B cell (primary cell): ENCODE measurements at regions of chr1 and their contacts with region 1.

Region 1: GRCh38 chr1:12078938-12079861 is 16.1 kb downstream of the TNFRSF8 start:
- DNase-seq: peak; percentile 67
- ATAC-seq: peak; percentile 63
- H3K4me3 ChIP-seq: peak overlapping the region in 4 of 5 experiments; percentile 1 to 28 (median 15)
- H3K4me3 Mint-ChIP-seq: peak overlapping the region; percentile 79
- H3K27ac ChIP-seq: peak overlapping the region; percentile 5 to 51
- H3K27ac Mint-ChIP-seq: peak overlapping the region; percentile 69
- H3K4me1 ChIP-seq: peaks cover 15 to 32% of the 10 kb centered on the region in 2 donors
- H3K4me1 Mint-ChIP-seq: peaks cover 30% of the 10 kb centered on the region
- H3K27me3 ChIP-seq: peaks cover 0 to 4% (median under 1%) of the 10 kb centered on the region in 4 experiments
- H3K27me3 Mint-ChIP-seq: peaks cover 4% of the 10 kb centered on the region
- CTCF ChIP-seq: peak; percentile 72

Region 2: GRCh38 chr1:11831945-11832725 is 247.1 kb before region 1 on chr1:
- CTCF ChIA-PET with region 1: no interaction called
- POLR2A ChIA-PET with region 1: no interaction called
- intact Hi-C with region 1: no loop called
- DNase-seq: no peak
- ATAC-seq: no peak
- H3K4me3 ChIP-seq: no peak overlapping the region
- H3K4me3 Mint-ChIP-seq: no peak overlapping the region
- H3K27ac ChIP-seq: no peak overlapping the region
- H3K27ac Mint-ChIP-seq: no peak overlapping the region
- H3K4me1 ChIP-seq: no peaks in the 10 kb centered on the region
- H3K4me1 Mint-ChIP-seq: no peaks in the 10 kb centered on the region
- H3K27me3 ChIP-seq: no peaks in the 10 kb centered on the region
- H3K27me3 Mint-ChIP-seq: no peaks in the 10 kb centered on the region
- CTCF ChIP-seq: no peak

Region 3: DNA sequence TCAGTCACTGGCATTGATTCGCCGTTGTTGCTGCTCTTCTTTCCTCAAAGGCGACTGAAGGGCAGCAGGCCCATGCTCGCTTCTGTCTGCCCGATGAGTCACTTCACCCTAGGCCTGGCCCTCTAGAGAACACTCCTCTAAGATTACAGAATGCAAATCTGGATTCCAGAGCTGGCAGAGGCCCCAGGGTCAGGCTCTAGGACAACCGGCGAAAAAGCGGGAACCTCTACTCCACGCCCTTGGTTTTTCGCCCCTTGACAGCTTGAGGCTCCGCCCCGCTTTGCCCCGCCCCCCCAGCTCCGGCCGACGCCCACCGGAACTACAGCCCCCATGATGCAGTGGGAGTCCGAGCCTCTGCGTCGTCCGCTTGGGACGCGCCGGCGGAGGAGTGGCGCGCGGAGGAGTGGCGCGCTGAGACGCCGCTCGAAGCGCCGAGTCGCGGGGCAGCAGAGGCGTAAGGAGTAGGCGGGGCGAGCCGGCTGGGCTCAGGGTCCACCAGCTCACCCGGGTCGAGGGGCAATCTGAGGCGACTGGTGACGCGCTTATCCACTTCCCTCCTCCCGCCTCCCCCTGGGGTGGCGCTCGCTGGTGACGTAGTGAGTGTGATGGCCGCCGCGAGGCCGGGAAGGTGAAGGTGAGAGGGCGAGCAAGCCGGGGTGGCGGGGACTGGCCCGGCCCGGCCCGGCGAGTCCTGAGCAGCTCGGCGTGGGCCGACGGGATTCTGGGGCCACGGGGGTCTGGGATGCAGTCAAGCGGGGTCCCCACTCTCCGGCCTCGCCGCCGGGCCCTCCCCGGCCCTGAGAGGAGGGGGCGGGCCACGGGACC is 99.1 kb before region 1 on chr1 and contains the start of gene MFN2:
- CTCF ChIA-PET with region 1: no interaction called
- POLR2A ChIA-PET with region 1: no interaction called
- intact Hi-C with region 1: loop called (anchors 5 kb)
- DNase-seq: peak; percentile 98
- ATAC-seq: peak; percentile 91
- H3K4me3 ChIP-seq: peak within 1 kb of the TSS; percentile 66 to 86 (median 81)
- H3K4me3 Mint-ChIP-seq: peak within 1 kb of the TSS; percentile 95
- H3K27ac ChIP-seq: peak within 1 kb of the TSS; percentile 81 to 94
- H3K27ac Mint-ChIP-seq: peak within 1 kb of the TSS; percentile 95
- H3K4me1 ChIP-seq: peaks cover 12 to 16% of the 10 kb centered on the region in 2 donors
- H3K4me1 Mint-ChIP-seq: peaks cover 40% of the 10 kb centered on the region
- H3K27me3 ChIP-seq: no peaks in the 10 kb centered on the region
- H3K27me3 Mint-ChIP-seq: no peaks in the 10 kb centered on the region
- CTCF ChIP-seq: no peak
- total RNA-seq, gene MFN2: 41.7 and 50.0 TPM in 2 replicates

Region 4: DNA sequence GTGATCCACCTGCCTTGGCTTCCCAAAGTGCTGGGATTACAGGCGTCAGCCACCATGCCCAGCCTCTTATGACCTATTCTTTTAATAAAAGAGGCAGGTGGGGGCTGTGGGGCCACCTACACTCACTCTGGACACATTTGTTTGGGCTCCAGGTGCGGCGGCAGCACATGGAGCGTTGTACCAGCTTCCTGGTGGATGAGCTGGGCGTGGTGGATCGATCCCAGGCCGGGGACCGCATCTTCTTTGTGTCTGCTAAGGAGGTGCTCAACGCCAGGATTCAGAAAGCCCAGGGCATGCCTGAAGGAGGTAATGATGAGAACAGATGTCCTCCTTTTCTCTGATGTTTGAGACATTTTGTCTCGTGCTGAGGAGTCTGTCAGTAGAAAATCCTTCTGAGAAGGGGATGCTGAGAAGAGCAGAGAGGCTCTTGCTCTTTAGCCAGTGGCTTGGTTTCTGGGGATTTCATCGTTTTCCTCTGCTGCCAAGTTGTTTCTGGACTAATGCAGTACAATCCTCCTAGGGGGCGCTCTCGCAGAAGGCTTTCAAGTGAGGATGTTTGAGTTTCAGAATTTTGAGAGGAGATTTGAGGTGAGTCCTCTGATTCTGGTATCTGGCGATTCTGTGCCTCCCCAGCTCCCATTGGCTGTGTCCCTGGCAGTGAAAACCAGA is 77.8 kb before region 1 on chr1:
- CTCF ChIA-PET with region 1: interaction called, 10 read pairs
- POLR2A ChIA-PET with region 1: no interaction called
- intact Hi-C with region 1: loop called (anchors 1 kb)
- DNase-seq: peak; percentile 48
- ATAC-seq: no peak
- H3K4me3 ChIP-seq: no peak overlapping the region
- H3K4me3 Mint-ChIP-seq: no peak overlapping the region
- H3K27ac ChIP-seq: no peak overlapping the region
- H3K27ac Mint-ChIP-seq: no peak overlapping the region
- H3K4me1 ChIP-seq: no peaks in the 10 kb centered on the region
- H3K4me1 Mint-ChIP-seq: peaks cover 4% of the 10 kb centered on the region
- H3K27me3 ChIP-seq: no peaks in the 10 kb centered on the region
- H3K27me3 Mint-ChIP-seq: no peaks in the 10 kb centered on the region
- CTCF ChIP-seq: peak; percentile 63

Region 5: GRCh38 chr1:12019858-12020509 is 59.2 kb before region 1 on chr1:
- CTCF ChIA-PET with region 1: interaction called, 10 read pairs
- POLR2A ChIA-PET with region 1: interaction called, 16 read pairs
- intact Hi-C with region 1: loop called (anchors 1 kb)
- DNase-seq: peak; percentile 40
- ATAC-seq: no peak
- H3K4me3 ChIP-seq: peak overlapping the region; percentile 61 to 81 (median 78)
- H3K4me3 Mint-ChIP-seq: peak overlapping the region; percentile 85
- H3K27ac ChIP-seq: peak overlapping the region in 1 of 2 donors; percentile 70
- H3K27ac Mint-ChIP-seq: peak overlapping the region; percentile 79
- H3K4me1 ChIP-seq: peaks cover 9% of the 10 kb centered on the region in 2 donors
- H3K4me1 Mint-ChIP-seq: peaks cover 18% of the 10 kb centered on the region
- H3K27me3 ChIP-seq: no peaks in the 10 kb centered on the region
- H3K27me3 Mint-ChIP-seq: no peaks in the 10 kb centered on the region
- CTCF ChIP-seq: no peak

Region 6: DNA sequence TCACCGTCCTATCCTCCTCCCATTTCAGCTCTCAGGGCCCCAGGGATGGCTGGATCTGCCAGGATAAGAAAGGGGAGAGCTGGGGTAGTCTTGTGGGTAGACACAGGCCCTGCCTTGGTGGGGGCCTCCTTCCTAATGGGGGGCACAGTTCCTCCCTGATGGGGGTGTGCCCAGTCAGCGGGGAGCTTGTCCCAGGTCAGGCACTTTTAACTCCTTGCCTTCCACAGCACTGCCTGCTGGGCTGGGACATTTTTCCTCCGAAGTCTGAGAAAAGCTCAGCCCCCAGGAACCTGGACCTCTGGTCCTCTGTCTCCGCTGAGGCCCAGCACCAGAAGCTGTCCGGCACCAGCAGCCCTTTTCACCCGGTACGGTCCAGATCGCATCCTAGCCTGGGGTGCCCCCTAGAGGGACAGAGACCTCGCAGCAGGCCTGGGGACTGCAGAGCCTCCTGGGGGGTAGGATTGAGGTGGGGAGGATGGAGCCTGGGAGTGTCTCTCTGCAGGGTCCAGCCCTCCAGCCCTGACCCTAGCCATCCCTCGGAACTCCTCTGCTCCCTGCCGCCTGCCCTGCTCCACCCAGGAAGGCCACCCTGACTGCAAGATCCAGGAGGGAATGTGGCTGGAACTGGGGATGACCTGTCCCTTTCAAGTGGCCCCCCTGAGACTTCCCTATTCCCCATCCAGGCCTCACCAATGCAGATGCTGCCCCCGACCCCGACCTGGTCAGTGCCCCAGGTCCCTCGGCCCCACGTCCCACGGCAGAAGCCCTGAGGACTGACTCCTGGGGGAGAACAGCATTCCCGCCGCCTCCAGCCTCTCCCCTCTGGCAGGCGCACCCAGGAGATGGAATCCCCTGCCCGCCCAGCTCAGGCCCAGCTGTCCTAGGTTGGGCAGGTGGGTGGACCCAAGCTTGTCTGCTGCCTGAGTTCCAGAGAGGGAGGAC is 47.9 kb before region 1 on chr1:
- CTCF ChIA-PET with region 1: interaction called, 41 read pairs
- POLR2A ChIA-PET with region 1: no interaction called
- intact Hi-C with region 1: no loop called
- DNase-seq: peak; percentile 47
- ATAC-seq: peak; percentile 58
- H3K4me3 ChIP-seq: no peak overlapping the region
- H3K4me3 Mint-ChIP-seq: no peak overlapping the region
- H3K27ac ChIP-seq: no peak overlapping the region
- H3K27ac Mint-ChIP-seq: no peak overlapping the region
- H3K4me1 ChIP-seq: peaks cover 4 to 10% of the 10 kb centered on the region in 2 donors
- H3K4me1 Mint-ChIP-seq: peaks cover 16% of the 10 kb centered on the region
- H3K27me3 ChIP-seq: no peaks in the 10 kb centered on the region
- H3K27me3 Mint-ChIP-seq: no peaks in the 10 kb centered on the region
- CTCF ChIP-seq: peak; percentile 64

Region 7: GRCh38 chr1:12040457-12041051 is 38.6 kb before region 1 on chr1:
- CTCF ChIA-PET with region 1: interaction called, 41 read pairs
- POLR2A ChIA-PET with region 1: interaction called, 19 read pairs
- intact Hi-C with region 1: loop called (anchors 5 kb)
- DNase-seq: peak; percentile 74
- ATAC-seq: peak; percentile 85
- H3K4me3 ChIP-seq: peak overlapping the region in 3 of 5 experiments; percentile 20 to 47 (median 32)
- H3K4me3 Mint-ChIP-seq: peak overlapping the region; percentile 74
- H3K27ac ChIP-seq: peak overlapping the region; percentile 82 to 91
- H3K27ac Mint-ChIP-seq: peak overlapping the region; percentile 95
- H3K4me1 ChIP-seq: peaks cover 40 to 50% of the 10 kb centered on the region in 2 donors
- H3K4me1 Mint-ChIP-seq: peaks cover 52% of the 10 kb centered on the region
- H3K27me3 ChIP-seq: no peaks in the 10 kb centered on the region
- H3K27me3 Mint-ChIP-seq: no peaks in the 10 kb centered on the region
- CTCF ChIP-seq: no peak

Region 8: DNA sequence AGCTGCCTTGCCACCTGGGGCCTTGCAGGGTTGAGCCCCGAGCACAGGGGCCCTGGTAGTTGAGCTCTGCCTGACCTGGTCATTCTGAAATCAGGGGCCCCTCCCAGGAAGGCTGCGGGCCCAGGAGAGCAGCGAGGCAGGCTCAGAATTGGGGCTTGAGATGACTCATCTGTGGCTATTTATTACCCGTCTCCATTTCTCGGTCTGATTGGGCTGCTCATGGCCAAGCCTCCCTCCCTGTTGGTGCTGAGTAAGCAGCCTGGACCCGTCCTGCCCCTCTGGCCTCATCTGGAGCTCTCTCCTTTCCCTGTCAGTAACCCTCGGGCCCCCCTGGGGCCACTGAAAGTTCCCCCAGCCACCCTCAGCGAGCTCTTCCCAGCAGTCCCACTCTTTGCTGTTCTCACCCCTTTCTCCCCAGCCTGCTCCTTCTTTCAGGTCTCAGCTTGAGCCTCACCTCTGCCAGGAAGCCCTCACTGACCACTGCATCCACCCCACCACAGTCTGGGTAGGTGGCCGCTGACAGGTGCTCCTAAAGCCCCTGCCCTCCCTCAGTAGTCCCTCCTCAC is 27.1 kb before region 1 on chr1:
- CTCF ChIA-PET with region 1: interaction called, 23 read pairs
- POLR2A ChIA-PET with region 1: interaction called, 5 read pairs
- intact Hi-C with region 1: no loop called
- DNase-seq: no peak
- ATAC-seq: peak; percentile 67
- H3K4me3 ChIP-seq: no peak overlapping the region
- H3K4me3 Mint-ChIP-seq: no peak overlapping the region
- H3K27ac ChIP-seq: no peak overlapping the region
- H3K27ac Mint-ChIP-seq: peak overlapping the region; percentile 53
- H3K4me1 ChIP-seq: peaks cover 17 to 21% of the 10 kb centered on the region in 2 donors
- H3K4me1 Mint-ChIP-seq: peaks cover 18% of the 10 kb centered on the region
- H3K27me3 ChIP-seq: no peaks in the 10 kb centered on the region
- H3K27me3 Mint-ChIP-seq: no peaks in the 10 kb centered on the region
- CTCF ChIP-seq: no peak